A673 (cell line): ENCODE measurements at regions of chr15 and their contacts with region 1.

Region 1: DNA sequence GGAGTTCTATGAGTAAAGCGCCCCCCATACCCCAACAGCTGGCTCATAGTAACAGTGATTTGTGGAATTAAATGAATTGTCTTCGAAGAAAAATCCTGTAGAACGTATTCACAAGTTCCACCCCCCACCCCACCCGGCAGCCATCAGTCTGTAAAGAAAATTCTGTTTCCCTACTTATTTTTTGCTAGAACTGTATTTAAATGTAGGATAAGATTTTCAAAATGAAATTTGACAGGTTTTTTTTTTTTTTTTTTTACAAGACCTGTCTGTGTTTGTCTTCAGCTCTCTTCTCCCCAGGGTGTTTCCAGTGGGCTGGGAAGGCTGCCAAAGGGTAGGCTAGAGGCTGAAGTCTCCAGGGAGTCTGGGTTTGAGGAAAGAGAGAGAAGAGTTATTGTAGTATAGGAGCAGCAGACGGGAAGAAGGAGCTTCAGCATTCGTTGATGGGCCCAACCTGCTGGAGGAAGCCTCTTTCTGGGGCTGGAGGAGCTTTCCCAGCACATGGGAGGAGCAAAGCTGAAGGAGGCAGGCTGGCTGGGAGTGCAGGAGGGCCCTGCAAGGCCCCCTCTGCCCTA is 130.6 kb upstream of the SEMA6D start:
- DNase-seq: peak; percentile 98
- H3K4me3 ChIP-seq: peak overlapping the region; percentile 16
- H3K27ac ChIP-seq: peak overlapping the region; percentile 48
- H3K4me1 ChIP-seq: peaks cover 38% of the 10 kb centered on the region
- H3K27me3 ChIP-seq: no peaks in the 10 kb centered on the region
- CTCF ChIP-seq: no peak

Region 2: GRCh38 chr15:47496343-47497171 is 90.2 kb before region 1 on chr15:
- CTCF ChIA-PET with region 1: no interaction called
- POLR2A ChIA-PET with region 1: no interaction called
- intact Hi-C with region 1: no loop called
- DNase-seq: no peak
- H3K4me3 ChIP-seq: no peak overlapping the region
- H3K27ac ChIP-seq: no peak overlapping the region
- H3K4me1 ChIP-seq: no peaks in the 10 kb centered on the region
- H3K27me3 ChIP-seq: no peaks in the 10 kb centered on the region
- CTCF ChIP-seq: 0 out of 2 replicates have a peak, but pooled peaks have one; percentile 17

Region 3: GRCh38 chr15:47652328-47652727 is 65.6 kb after region 1 on chr15:
- CTCF ChIA-PET with region 1: no interaction called
- POLR2A ChIA-PET with region 1: interaction called, 19 read pairs
- intact Hi-C with region 1: no loop called
- DNase-seq: no peak
- H3K4me3 ChIP-seq: no peak overlapping the region
- H3K27ac ChIP-seq: no peak overlapping the region
- H3K4me1 ChIP-seq: peaks cover under 1% of the 10 kb centered on the region
- H3K27me3 ChIP-seq: no peaks in the 10 kb centered on the region
- CTCF ChIP-seq: no peak